PC-9 (cell line): ENCODE measurements at regions of chr6 and their contacts with region 1.

Region 1: DNA sequence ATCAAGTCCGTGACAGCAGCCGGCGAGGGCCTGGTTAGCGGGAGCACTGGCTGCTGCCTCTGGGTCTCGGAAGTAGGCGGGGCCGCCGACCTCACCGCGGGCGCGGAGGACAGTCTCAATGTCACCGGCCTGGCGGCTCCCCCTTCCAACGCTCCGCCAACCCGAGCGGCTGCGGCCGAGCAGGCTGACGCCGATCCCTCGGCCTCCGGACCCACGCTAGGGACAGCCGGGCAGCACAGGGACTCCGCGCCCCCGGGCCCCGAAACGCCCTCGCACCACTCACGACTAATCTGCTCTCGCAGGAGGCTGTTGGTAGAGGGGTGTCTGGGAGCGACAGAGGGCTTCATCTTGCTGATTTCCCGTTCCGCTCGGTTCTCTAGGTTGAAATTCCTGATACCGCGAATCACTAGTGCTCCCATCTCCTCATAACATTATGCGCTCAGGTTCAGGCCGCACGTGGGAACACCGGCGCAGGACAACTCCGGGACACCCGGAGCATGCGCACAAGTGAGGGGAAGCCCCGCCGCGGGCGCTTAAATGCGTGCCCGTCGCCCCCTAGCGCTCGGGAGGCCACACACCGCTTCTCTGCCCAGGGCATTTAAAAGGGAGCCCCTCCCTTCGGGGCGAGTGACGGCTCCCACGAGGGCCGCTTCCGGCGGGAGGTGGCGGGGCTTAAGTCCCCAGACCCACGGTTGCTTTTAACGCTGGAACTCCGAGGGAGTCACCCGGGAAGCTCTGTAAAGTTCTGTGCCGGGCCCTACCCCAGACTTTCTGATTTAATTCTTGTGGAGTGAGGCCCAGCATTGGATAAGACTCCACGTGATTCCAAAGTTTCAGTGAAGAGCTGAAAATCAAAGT is at the start of gene NDUFAF4:
- DNase-seq: peak; percentile 89 to 96
- H3K4me3 ChIP-seq: peak within 1 kb of the TSS; percentile 83
- H3K27ac ChIP-seq: peak within 1 kb of the TSS; percentile 90
- H3K4me1 ChIP-seq: peaks cover 21% of the 10 kb centered on the region
- H3K27me3 ChIP-seq: no peaks in the 10 kb centered on the region
- CTCF ChIP-seq: peak; percentile 94
- total RNA-seq, gene NDUFAF4: 32.1 and 35.7 TPM in 2 replicates

Region 2: GRCh38 chr6:96391776-96392360 is 505.7 kb before region 1 on chr6:
- CTCF ChIA-PET with region 1: no interaction called
- POLR2A ChIA-PET with region 1: no interaction called
- intact Hi-C with region 1: loop called (anchors 10 kb)
- DNase-seq: no peak
- H3K4me3 ChIP-seq: no peak overlapping the region
- H3K27ac ChIP-seq: no peak overlapping the region
- H3K4me1 ChIP-seq: no peaks in the 10 kb centered on the region
- H3K27me3 ChIP-seq: no peaks in the 10 kb centered on the region
- CTCF ChIP-seq: no peak

Region 3: DNA sequence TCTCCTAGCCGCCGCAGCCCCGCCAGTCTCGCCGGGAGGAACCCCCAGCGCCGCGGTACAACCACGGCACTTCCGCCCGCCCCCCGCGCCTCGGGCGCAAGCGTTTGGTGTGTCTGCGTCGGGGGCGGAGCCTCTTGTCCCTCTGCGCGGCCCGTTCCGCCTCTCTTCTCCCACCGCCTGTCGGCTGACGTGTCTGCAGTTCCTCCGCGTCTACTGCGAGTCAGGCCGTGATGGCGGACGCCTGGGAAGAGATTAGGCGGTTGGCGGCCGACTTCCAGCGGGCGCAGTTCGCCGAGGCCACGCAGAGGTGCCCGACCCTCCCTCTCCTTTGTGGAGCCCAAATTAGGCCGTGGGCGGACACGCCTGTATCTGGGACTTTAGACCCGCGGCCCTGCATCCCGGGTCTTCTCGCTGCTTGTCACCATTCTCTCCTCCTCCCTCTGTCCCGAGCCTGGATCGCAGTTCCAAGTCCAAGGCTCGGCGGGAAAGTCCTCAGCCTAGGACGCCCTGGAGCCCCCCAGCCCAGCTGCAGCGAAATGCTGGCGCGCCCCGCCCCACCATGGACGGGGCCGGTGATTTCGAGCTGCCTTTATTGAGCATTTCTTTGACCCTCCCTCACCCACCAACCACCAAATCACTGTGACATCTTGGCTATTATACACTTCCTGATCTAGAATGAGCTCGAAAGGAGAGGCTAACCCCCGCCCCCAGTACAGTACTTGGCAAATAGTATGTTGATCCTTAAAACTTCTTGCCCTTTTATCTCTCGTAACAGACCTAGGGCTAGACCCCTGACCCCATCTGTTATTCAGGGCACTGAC is 375.8 kb before region 1 on chr6 and contains the start of gene UFL1:
- CTCF ChIA-PET with region 1: no interaction called
- POLR2A ChIA-PET with region 1: no interaction called
- intact Hi-C with region 1: loop called (anchors 2 kb)
- DNase-seq: peak; percentile 89 to 90
- H3K4me3 ChIP-seq: peak within 1 kb of the TSS; percentile 72
- H3K27ac ChIP-seq: peak within 1 kb of the TSS; percentile 94
- H3K4me1 ChIP-seq: peaks cover 35% of the 10 kb centered on the region
- H3K27me3 ChIP-seq: no peaks in the 10 kb centered on the region
- CTCF ChIP-seq: no peak
- total RNA-seq, gene UFL1: 19.3 and 25.3 TPM in 2 replicates

Region 4: DNA sequence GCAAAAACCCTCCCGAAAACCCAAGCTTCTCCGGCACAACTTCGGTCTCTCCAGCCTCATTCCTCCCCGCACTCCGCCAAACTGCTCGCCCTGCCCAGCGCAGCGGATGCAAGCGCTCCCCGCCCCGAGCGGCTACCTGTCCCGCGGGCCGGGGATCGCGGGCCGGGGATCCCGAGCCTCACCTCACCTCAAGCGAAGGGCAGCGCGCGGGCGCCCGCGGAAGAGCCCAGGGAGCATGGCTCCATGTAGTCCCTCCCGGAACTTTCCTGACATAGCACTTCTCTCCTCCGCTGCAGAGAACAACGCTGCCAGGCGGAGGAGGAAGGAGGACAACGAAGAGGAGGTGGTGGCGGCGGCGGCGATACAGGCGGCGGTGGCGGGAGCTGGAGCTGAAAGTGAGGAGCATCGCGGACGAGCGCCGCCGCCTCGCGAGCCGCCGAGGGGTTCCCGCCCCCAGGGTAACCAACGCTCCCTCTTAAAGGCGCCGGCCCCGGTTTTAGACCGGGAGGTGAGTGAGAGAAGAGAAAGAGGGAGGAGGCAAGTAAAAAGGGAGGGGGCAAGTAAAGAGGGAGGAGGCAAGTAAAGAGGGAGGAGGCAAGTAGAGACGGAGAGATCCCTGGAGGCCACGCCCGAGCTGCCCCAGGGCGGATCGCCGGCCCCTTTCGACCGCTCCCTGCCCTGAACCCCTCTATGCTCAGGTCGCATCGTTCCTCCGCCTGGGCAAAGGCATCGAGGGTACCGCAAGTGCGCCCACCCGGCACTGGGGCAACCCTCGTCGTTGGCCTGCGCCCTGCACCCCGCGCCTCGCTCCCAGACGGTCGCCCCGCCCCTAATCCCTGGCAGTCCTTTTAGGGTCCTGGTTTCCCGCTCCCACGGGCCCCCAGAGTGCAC is 60.3 kb before region 1 on chr6 and contains the start of gene GPR63:
- CTCF ChIA-PET with region 1: no interaction called
- POLR2A ChIA-PET with region 1: no interaction called
- intact Hi-C with region 1: loop called (anchors 1 kb)
- DNase-seq: peak; percentile 60 to 73
- H3K4me3 ChIP-seq: peak within 1 kb of the TSS; percentile 69
- H3K27ac ChIP-seq: no peak within 1 kb of the TSS
- H3K4me1 ChIP-seq: peaks cover 13% of the 10 kb centered on the region
- H3K27me3 ChIP-seq: no peaks in the 10 kb centered on the region; the same call in 1 of the 2 replicates
- CTCF ChIP-seq: no peak
- total RNA-seq, gene GPR63: 1.3 and 1.9 TPM in 2 replicates

Region 5: GRCh38 chr6:96947055-96947454 is 49.4 kb after region 1 on chr6:
- CTCF ChIA-PET with region 1: no interaction called
- POLR2A ChIA-PET with region 1: no interaction called
- intact Hi-C with region 1: no loop called
- DNase-seq: no peak
- H3K4me3 ChIP-seq: no peak overlapping the region
- H3K27ac ChIP-seq: no peak overlapping the region
- H3K4me1 ChIP-seq: no peaks in the 10 kb centered on the region
- H3K27me3 ChIP-seq: no peaks in the 10 kb centered on the region
- CTCF ChIP-seq: no peak

Region 6: DNA sequence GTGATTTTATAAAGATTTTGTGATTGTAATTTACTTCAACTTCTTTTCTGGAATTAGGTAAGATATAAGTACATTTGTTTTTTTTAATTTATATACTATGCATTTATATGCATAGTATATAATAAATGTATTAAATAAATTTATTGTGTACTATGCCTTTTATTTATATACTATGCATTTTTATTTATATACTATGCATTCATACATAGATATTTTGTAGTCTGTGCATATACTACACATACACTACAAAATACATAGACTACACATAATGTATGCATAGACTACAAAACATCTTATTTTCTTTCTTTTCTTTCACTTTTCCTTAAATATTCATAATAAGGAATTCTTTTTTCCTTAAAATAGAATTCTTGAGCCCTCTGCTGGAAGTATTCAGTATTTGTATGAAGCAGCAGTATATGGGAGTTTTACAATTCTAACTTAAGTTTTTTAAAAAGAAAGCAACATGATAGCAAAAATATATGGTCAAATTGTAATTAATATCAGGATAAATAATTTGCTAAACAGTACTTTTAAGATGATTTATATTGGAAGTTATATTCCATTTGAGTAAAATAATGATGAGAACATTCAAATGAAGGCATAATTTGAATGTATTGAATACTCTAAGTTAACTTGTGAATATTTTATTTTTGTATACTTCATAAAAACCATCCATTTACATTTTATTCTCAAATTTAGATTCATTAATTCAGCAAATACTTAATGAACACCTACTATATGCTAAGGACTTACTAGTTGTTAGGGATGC is 156.2 kb after region 1 on chr6:
- CTCF ChIA-PET with region 1: no interaction called
- POLR2A ChIA-PET with region 1: interaction called, 6 read pairs
- intact Hi-C with region 1: loop called (anchors 1 kb)
- DNase-seq: no peak
- H3K4me3 ChIP-seq: no peak overlapping the region
- H3K27ac ChIP-seq: no peak overlapping the region
- H3K4me1 ChIP-seq: no peaks in the 10 kb centered on the region
- H3K27me3 ChIP-seq: no peaks in the 10 kb centered on the region
- CTCF ChIP-seq: peak; percentile 87

Region 7: GRCh38 chr6:97394160-97394748 is 496.6 kb after region 1 on chr6:
- CTCF ChIA-PET with region 1: no interaction called
- POLR2A ChIA-PET with region 1: no interaction called
- intact Hi-C with region 1: loop called (anchors 10 kb)
- DNase-seq: peak; percentile 15 to 52
- H3K4me3 ChIP-seq: no peak overlapping the region
- H3K27ac ChIP-seq: no peak overlapping the region
- H3K4me1 ChIP-seq: no peaks in the 10 kb centered on the region
- H3K27me3 ChIP-seq: no peaks in the 10 kb centered on the region
- CTCF ChIP-seq: peak; percentile 96